ENCODE measurements at regions of chr1 and their contacts with region 1.

Region 1: DNA sequence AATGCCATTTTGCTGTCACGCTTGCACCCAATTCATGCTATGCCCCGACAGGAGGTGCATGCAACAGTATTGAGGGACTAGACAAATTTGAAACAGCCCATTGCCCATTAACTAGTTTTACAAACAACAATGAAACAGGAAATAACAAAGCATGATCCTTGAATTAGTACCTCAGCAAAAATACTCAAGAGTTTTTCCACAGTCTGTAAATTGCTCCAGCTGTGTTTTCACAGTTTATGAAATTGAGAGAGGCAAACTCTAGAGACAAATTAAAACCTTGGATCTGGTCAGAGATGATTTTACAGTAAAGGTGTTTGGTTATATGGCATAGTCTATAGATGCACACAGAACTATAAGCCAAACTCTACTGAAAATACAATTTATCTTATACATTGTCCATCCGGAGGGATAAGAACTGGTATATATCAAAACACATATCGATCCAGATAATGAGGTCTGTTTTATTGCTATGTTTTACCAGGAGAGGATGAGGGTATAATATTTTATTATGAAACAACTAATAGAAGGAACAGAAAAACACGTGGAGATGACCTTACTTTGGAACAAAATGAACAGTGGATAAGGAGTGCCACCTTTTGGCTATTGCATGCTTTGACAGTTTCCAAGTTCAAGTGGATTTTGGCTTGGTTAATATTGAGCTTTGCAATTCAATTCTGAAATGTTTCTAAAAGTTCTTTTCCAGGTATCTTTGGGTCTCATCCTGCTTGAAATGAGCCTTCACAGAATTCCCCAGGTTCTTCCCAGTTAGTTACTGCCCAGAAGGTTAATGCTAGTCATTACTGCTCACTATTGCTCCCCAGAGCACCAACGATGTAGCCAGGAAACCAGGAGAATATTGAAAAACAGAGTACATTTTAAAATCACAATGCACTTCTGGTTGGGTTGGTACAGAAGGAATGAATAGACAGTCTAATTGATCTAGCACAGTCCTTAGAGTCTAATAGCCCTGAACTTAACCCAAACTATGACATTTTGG is 45.7 kb downstream of the ZC3H11B start:
- DNase-seq: peak; percentile 78
- H3K4me3 Mint-ChIP-seq: no peak overlapping the region
- H3K27ac Mint-ChIP-seq: no peak overlapping the region
- H3K4me1 Mint-ChIP-seq: no peaks in the 10 kb centered on the region
- H3K27me3 Mint-ChIP-seq: peaks cover 91% of the 10 kb centered on the region
- CTCF ChIP-seq: peak; percentile 85

Region 2: GRCh38 chr1:218299416-218299815 is 1267.8 kb before region 1 on chr1:
- CTCF ChIA-PET with region 1: interaction called, 32 read pairs
- POLR2A ChIA-PET with region 1: no interaction called
- intact Hi-C with region 1: no loop called
- DNase-seq: peak; percentile 70
- H3K4me3 Mint-ChIP-seq: no peak overlapping the region
- H3K27ac Mint-ChIP-seq: no peak overlapping the region
- H3K4me1 Mint-ChIP-seq: peaks cover 41% of the 10 kb centered on the region
- H3K27me3 Mint-ChIP-seq: no peaks in the 10 kb centered on the region
- CTCF ChIP-seq: peak; percentile 68

Region 3: DNA sequence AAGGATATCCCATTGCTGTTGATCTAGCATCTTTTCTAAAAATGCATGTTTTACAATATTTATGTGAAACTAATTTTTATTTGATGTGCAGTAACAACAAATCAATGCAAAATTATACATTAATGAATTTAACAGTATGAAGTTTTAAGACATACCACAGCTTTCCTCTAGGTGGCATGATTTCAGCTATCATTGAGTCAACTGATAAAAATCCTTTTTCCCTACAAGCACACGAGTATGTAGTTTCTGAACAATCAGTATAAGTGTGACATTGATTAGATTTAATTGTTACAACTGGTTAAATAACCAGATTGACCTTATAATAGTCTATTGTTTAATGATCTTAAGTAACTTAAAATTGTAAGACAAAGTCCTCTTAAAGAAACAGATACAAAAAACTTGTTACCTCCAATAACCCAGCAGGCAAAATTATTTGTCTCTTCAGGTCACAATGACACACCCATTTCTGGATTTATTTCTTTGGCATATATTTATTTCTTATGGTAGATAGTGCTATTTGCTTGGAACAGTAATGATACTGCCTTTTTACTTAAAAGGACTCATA is 1227.9 kb before region 1 on chr1:
- CTCF ChIA-PET with region 1: interaction called, 12 read pairs
- POLR2A ChIA-PET with region 1: no interaction called
- intact Hi-C with region 1: no loop called
- DNase-seq: peak; percentile 71
- H3K4me3 Mint-ChIP-seq: no peak overlapping the region
- H3K27ac Mint-ChIP-seq: no peak overlapping the region
- H3K4me1 Mint-ChIP-seq: no peaks in the 10 kb centered on the region
- H3K27me3 Mint-ChIP-seq: no peaks in the 10 kb centered on the region
- CTCF ChIP-seq: peak; percentile 90

Region 4: GRCh38 chr1:219293410-219293809 is 273.8 kb before region 1 on chr1:
- CTCF ChIA-PET with region 1: interaction called, 11 read pairs
- POLR2A ChIA-PET with region 1: interaction called, 3 read pairs
- intact Hi-C with region 1: no loop called
- DNase-seq: peak; percentile 44
- H3K4me3 Mint-ChIP-seq: no peak overlapping the region
- H3K27ac Mint-ChIP-seq: no peak overlapping the region
- H3K4me1 Mint-ChIP-seq: no peaks in the 10 kb centered on the region
- H3K27me3 Mint-ChIP-seq: peaks cover 84% of the 10 kb centered on the region
- CTCF ChIP-seq: no peak

Region 5: DNA sequence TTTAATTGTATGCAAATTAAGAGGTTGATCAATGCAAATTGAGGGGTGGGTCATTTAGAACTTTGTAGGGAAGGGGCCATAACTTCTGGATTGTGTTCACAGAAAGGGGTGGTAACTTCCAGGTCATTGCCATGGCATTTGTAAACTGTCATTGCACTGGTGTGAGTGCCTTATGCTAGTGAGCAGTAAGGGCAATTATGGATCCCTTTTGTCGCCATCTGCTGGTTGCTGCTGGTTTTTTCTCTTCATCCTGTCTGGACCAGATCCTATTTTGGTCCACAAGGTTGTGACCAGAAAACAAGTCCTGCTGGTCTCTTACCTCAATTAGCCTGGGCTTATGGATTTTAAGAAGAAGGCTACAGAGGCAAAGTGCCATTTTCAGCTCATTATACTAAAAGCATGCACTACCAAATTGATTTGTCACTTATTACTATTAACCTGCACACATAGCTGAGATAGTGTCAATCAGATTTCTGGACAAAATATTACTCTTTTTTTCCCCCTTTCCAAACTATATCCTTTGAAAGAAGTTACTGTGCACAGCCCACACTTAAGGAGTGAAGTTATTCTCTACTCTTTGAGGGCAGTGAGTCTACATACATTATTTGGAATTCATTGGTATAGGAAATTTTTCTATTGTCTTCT is 150.5 kb before region 1 on chr1:
- CTCF ChIA-PET with region 1: interaction called, 4 read pairs
- POLR2A ChIA-PET with region 1: no interaction called
- intact Hi-C with region 1: loop called (anchors 10 kb)
- DNase-seq: peak; percentile 85
- H3K4me3 Mint-ChIP-seq: no peak overlapping the region
- H3K27ac Mint-ChIP-seq: no peak overlapping the region
- H3K4me1 Mint-ChIP-seq: no peaks in the 10 kb centered on the region
- H3K27me3 Mint-ChIP-seq: peaks cover 83% of the 10 kb centered on the region
- CTCF ChIP-seq: peak; percentile 92

Region 6: DNA sequence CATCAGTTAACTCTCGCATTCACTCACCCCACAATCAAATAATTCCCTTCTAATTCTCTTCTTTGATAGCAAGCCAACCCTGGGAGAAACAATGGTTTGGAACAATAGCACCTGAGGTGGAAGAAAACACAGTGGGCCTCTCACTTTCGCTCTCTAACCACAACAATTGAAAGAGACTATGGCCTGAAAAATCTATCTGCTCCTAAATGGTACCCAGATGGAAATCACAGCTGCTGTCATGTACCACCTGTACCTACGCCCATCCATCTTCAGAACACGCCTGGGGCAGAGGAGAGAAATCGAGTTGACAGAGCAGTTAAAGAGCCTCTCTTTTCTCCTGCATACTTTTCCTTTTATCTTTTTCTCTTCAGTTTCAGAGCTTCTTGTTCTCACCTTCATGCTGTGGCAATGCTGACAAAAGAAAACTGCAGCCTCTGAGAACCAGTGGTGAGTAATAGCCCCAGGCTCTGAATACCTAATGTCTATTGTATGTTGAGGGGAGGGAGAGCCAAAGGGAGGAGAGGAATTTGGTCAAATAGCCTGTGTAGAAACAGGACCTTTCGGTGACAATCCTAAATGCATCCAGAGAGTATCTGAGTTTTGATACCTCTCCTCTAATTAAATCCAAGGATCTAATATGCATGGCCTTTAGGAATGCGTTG is 12.1 kb before region 1 on chr1:
- CTCF ChIA-PET with region 1: interaction called, 60 read pairs
- POLR2A ChIA-PET with region 1: no interaction called
- intact Hi-C with region 1: no loop called
- DNase-seq: peak; percentile 79
- H3K4me3 Mint-ChIP-seq: no peak overlapping the region
- H3K27ac Mint-ChIP-seq: no peak overlapping the region
- H3K4me1 Mint-ChIP-seq: peaks cover 12% of the 10 kb centered on the region
- H3K27me3 Mint-ChIP-seq: peaks cover 52% of the 10 kb centered on the region
- CTCF ChIP-seq: no peak

Region 7: DNA sequence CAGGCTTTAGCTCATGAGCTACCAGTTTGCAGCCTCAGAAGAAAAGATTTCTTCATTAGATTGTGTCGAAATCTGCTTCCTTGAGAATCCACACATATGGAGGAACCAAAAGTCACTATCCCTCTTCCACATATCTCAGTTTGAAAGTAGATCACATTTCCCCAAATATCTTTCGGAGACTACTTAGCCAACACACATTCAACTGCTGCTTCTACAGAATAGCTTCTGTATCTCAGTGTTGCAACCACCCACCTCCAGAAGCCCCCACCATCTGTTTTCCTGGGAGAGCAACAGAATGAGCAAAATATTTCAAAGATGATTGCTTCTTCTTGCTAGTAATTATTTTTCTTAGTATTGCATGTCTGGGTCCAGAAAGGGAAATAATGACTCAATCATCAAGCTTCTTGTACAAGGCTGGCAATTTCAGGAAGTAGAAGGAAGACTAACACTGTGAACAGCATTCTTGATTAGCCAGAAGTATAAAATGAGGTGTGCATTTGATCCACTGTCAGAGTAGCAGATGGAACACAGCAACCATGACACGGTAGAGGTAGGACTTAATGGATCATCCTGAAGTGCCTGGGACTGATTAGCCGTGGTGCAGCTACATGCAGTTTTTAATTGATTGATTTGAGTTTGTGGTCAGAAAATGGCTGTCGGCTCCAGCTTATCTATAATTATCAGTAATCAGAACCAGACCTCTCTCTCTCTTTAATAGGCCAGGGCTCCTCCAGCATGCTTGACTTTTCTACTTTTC is 20.7 kb after region 1 on chr1:
- CTCF ChIA-PET with region 1: interaction called, 29 read pairs
- POLR2A ChIA-PET with region 1: no interaction called
- intact Hi-C with region 1: no loop called
- DNase-seq: no peak
- H3K4me3 Mint-ChIP-seq: no peak overlapping the region
- H3K27ac Mint-ChIP-seq: no peak overlapping the region
- H3K4me1 Mint-ChIP-seq: peaks cover 7% of the 10 kb centered on the region
- H3K27me3 Mint-ChIP-seq: peaks cover 34% of the 10 kb centered on the region
- CTCF ChIP-seq: no peak